MCF 10A (cell line): ENCODE measurements at regions of chr17 and their contacts with region 1.

Region 1: DNA sequence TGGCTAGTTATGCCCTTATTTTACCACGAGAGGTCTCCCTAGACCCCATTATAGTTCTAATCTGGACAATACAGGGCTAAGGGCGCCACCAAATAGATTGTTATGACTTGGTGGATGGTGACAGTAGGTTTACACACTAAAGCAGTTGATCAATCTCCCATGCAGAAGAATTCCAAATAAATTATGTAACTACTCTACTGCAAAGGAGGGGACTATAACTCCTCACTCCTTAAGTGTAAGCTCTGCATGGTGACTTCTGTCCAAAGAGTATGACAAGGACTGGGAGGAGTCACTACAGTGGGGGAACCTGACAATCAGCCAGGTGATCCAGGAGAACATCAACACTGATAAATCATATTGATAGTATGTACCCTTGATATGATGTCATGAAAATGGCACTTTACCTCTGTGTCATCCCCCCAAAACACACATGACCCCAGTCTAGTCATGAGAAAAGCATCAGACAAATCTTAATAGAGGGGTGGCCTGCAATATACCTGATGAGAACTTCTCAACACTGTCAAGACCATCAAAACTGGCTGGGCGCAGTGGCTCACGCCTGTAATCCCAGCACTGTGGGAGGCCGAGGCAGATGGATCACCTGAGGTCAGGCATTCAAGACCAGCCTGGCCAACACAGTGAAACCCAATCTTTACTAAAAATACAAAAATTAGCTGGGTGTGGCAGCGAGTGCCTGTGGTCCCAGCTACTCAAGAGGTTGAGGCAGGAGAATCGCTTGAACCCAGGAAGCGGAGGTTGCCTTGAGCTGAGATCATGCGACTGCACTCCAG is 20.1 kb upstream of the YPEL2 start:
- DNase-seq: peak; percentile 75
- H3K4me3 Mint-ChIP-seq: no peak overlapping the region
- H3K27ac Mint-ChIP-seq: no peak overlapping the region
- H3K4me1 Mint-ChIP-seq: peaks cover 5% of the 10 kb centered on the region
- H3K27me3 Mint-ChIP-seq: no peaks in the 10 kb centered on the region
- CTCF ChIP-seq: peak; percentile 79

Region 2: DNA sequence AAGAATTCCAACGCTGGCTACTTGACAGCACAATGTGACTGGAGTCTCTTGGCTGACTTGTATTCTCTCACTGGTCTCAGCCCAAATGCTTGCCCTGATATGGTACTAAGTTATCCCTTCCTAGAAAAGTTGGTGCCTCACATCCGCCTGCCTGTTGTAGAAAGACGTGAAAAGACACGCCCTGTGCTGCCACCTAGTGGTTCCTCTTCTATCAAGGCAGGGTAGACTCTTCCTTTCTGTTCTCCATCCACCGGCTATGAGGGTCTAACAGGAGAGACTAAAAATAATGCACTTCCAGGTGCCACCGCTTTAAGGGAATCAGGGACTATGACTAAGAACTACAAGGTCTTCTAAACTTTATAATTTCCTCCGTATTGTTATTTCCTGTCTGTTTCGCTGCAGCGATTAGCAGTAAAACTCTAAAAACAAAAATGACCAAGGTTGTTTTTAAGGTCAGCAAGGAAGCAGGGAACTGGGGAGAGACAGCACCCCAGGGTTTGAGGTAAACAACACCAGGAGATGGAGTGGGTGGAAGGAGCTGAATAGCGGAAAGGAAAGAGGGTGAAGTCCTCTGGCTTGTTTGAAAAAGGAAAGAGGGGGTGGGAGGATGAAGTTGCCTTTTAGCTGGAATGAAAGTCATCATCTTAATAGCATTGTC is 129.6 kb after region 1 on chr17:
- CTCF ChIA-PET with region 1: interaction called, 227 read pairs
- POLR2A ChIA-PET with region 1: interaction called, 18 read pairs
- intact Hi-C with region 1: loop called (anchors 1 kb)
- DNase-seq: peak; percentile 89
- H3K4me3 Mint-ChIP-seq: no peak overlapping the region
- H3K27ac Mint-ChIP-seq: peak overlapping the region; percentile 89
- H3K4me1 Mint-ChIP-seq: peaks cover 8% of the 10 kb centered on the region
- H3K27me3 Mint-ChIP-seq: no peaks in the 10 kb centered on the region
- CTCF ChIP-seq: peak; percentile 68

Region 3: GRCh38 chr17:59521204-59522126 is 210.1 kb after region 1 on chr17:
- CTCF ChIA-PET with region 1: interaction called, 6 read pairs
- POLR2A ChIA-PET with region 1: no interaction called
- intact Hi-C with region 1: loop called (anchors 1 kb)
- DNase-seq: peak; percentile 67
- H3K4me3 Mint-ChIP-seq: no peak overlapping the region
- H3K27ac Mint-ChIP-seq: peak overlapping the region; percentile 50
- H3K4me1 Mint-ChIP-seq: peaks cover 12% of the 10 kb centered on the region
- H3K27me3 Mint-ChIP-seq: no peaks in the 10 kb centered on the region
- CTCF ChIP-seq: peak; percentile 85

Region 4: DNA sequence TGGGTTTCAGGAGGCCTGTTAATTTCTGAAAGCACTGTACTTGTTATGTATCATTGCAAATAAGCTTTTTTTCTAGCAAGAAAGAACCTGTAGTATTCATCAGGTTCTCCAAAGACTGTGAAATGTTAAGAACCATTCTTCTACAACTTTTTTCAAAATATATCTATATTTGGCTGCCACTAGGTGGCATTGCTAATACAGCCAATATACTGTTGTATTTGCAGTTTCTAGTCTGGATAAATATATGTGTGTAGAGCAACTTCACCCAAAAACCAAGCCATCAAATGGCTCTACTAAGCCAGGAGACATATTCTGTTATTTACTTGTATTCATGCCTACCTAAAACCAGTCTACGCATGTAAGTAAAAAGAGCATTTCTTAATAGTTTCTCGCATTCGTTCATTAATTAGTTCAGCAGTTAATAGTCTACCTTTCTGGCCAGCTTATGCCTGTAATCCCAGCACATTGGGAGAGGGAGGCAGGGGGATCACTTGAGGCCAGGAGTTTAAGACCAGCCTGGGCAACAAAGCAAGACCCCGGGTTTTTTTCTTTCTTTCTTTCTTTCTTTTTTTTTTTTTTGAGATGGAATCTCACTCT is 435.6 kb after region 1 on chr17:
- CTCF ChIA-PET with region 1: no interaction called
- POLR2A ChIA-PET with region 1: no interaction called
- intact Hi-C with region 1: loop called (anchors 10 kb)
- DNase-seq: peak; percentile 50
- H3K4me3 Mint-ChIP-seq: no peak overlapping the region
- H3K27ac Mint-ChIP-seq: no peak overlapping the region
- H3K4me1 Mint-ChIP-seq: no peaks in the 10 kb centered on the region
- H3K27me3 Mint-ChIP-seq: no peaks in the 10 kb centered on the region
- CTCF ChIP-seq: peak; percentile 58

Region 5: DNA sequence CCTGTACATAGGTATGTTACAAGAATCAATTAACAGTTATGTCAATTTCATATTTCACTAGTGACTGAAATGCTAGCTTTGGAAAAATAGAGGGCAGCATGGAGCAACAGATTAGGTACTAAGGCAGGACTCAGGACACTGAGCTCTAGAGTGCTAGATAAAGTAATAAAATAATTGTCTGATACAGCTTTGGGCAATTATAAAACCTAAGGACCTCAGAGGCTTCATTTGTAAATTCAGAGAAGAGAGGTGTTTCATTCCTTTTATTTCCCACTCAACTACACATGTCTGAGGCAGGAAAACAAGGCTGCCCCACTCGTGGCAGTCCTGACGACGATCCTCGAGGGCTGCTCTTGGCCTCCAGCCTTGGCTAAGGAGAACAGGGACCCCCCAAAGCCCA is 919.9 kb after region 1 on chr17:
- CTCF ChIA-PET with region 1: no interaction called
- POLR2A ChIA-PET with region 1: no interaction called
- intact Hi-C with region 1: no loop called
- DNase-seq: peak; percentile 43
- H3K4me3 Mint-ChIP-seq: no peak overlapping the region
- H3K27ac Mint-ChIP-seq: no peak overlapping the region
- H3K4me1 Mint-ChIP-seq: peaks cover 6% of the 10 kb centered on the region
- H3K27me3 Mint-ChIP-seq: no peaks in the 10 kb centered on the region
- CTCF ChIP-seq: peak; percentile 47